ENCODE measurements at regions of chr6 and their contacts with region 1.

Region 1: DNA sequence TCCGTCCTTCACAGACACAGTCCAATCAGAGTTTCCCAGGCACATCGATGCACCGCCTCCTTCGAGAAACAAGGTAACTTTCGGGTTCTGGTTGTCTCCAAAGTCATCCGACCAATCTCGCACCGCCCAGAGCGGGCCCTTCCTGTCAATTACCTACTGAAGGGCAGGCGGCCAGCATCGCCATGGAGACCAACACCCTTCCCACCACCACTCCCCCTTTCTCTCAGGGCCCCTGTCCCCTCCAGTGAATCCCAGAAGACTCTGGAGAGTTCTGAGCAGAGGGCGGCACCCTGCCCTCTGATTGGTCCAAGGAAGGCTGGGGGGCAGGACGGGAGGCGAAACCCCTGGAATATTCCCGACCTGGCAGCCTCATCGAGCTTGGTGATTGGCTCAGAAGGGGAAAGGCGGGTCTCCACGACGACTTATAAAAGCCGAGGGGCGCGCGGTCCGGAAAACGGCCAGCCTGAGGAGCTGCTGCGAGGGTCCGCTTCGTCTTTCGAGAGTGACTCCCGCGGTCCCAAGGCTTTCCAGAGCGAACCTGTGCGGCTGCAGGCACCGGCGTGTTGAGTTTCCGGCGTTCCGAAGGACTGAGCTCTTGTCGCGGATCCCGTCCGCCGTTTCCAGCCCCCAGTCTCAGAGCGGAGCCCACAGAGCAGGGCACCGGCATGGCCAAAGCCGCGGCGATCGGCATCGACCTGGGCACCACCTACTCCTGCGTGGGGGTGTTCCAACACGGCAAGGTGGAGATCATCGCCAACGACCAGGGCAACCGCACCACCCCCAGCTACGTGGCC is at the start of gene HSPA1B:
- DNase-seq: peak; percentile 70
- ATAC-seq: peak; percentile 76
- H3K4me3 Mint-ChIP-seq: peak within 1 kb of the TSS; percentile 91
- H3K27ac Mint-ChIP-seq: peak within 1 kb of the TSS; percentile 99
- H3K4me1 Mint-ChIP-seq: peaks cover 40% of the 10 kb centered on the region
- H3K27me3 Mint-ChIP-seq: no peaks in the 10 kb centered on the region
- CTCF ChIP-seq: no peak
- total RNA-seq, gene HSPA1B: 23.7 and 30.4 TPM in 2 replicates

Region 2: DNA sequence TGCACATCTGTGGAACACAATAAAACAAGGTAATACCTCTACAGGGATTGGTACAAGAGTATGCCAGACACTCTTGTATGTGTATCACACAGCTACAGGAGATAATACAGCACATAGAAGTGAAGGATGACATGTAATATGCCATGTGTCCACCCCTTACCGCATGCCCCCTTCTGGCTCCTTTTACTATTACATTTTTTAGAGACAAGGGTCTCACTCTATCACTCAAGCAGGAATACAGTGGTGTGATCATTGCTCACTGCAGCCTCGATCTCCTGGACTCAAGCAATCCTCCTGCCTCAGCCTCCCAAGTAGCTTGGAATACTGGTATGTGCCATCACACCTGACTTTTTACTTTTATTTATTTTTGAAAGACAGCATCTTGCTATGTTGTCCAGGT is 230.5 kb before region 1 on chr6:
- CTCF ChIA-PET with region 1: interaction called, 17 read pairs
- POLR2A ChIA-PET with region 1: interaction called, 12 read pairs
- intact Hi-C with region 1: loop called (anchors 1 kb)
- DNase-seq: no peak
- ATAC-seq: peak; percentile 73
- H3K4me3 Mint-ChIP-seq: peak overlapping the region; percentile 25
- H3K27ac Mint-ChIP-seq: peak overlapping the region; percentile 75
- H3K4me1 Mint-ChIP-seq: peaks cover 58% of the 10 kb centered on the region
- H3K27me3 Mint-ChIP-seq: no peaks in the 10 kb centered on the region
- CTCF ChIP-seq: no peak

Region 3: GRCh38 chr6:31680840-31681671 is 146.4 kb before region 1 on chr6 and contains the start of gene LY6G5C:
- CTCF ChIA-PET with region 1: interaction called, 22 read pairs
- POLR2A ChIA-PET with region 1: interaction called, 23 read pairs
- intact Hi-C with region 1: loop called (anchors 1 kb)
- DNase-seq: peak; percentile 46
- ATAC-seq: peak; percentile 75
- H3K4me3 Mint-ChIP-seq: peak within 1 kb of the TSS; percentile 84
- H3K27ac Mint-ChIP-seq: peak within 1 kb of the TSS; percentile 72
- H3K4me1 Mint-ChIP-seq: peaks cover 40% of the 10 kb centered on the region
- H3K27me3 Mint-ChIP-seq: no peaks in the 10 kb centered on the region
- CTCF ChIP-seq: no peak
- total RNA-seq, gene LY6G5C: 0.29 and 0.73 TPM in 2 replicates

Region 4: DNA sequence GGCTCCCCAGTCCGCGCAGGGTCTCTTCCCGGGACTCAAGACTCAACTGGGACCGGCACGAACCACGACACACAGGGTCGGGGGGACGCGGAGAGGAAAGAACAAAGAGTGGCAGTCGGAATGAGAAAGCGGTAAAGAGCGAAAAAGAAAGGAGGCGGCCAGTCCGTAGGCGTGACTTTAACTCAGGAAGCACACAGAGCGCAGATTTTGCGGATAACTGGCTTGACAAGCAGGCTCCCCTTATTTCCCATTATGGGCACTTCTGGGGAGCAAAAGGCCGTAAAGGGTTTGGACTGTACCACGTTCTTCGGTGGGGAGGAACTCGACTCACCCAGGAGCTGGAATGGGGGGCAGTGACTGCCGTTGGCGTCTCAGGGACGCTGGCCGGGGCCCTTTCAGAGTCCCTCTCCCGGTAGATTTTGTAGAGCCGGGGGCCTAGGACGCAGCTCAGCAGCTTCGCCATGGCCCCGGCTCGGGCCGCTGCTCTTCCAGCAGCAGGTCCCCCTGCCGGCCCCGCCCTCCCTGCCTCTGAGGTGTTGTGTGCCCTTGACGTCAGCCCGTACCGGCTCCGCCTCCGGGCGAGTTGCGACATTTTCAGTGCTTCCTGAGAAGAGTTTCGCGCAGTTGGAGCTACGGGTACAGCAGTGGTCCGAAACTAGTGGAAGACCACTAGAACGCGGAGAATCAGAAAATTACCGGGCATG is 124.5 kb before region 1 on chr6 and contains the start of gene ABHD16A:
- CTCF ChIA-PET with region 1: no interaction called
- POLR2A ChIA-PET with region 1: interaction called, 6 read pairs
- intact Hi-C with region 1: loop called (anchors 1 kb)
- DNase-seq: peak; percentile 94
- ATAC-seq: peak; percentile 93
- H3K4me3 Mint-ChIP-seq: peak within 1 kb of the TSS; percentile 99
- H3K27ac Mint-ChIP-seq: peak within 1 kb of the TSS; percentile 89
- H3K4me1 Mint-ChIP-seq: peaks cover 28% of the 10 kb centered on the region
- H3K27me3 Mint-ChIP-seq: no peaks in the 10 kb centered on the region
- CTCF ChIP-seq: no peak
- total RNA-seq, gene ABHD16A: 49.3 and 59.1 TPM in 2 replicates

Region 5: GRCh38 chr6:31769684-31770371 is 57.7 kb before region 1 on chr6:
- CTCF ChIA-PET with region 1: interaction called, 14 read pairs
- POLR2A ChIA-PET with region 1: interaction called, 20 read pairs
- intact Hi-C with region 1: loop called (anchors 1 kb)
- DNase-seq: peak; percentile 76
- ATAC-seq: peak; percentile 98
- H3K4me3 Mint-ChIP-seq: no peak overlapping the region
- H3K27ac Mint-ChIP-seq: no peak overlapping the region
- H3K4me1 Mint-ChIP-seq: peaks cover 16% of the 10 kb centered on the region
- H3K27me3 Mint-ChIP-seq: no peaks in the 10 kb centered on the region
- CTCF ChIP-seq: no peak

Region 6: GRCh38 chr6:31815025-31815838 is 12.3 kb before region 1 on chr6 and contains the starts of genes HSPA1A and HSPA1L:
- CTCF ChIA-PET with region 1: interaction called, 10 read pairs
- POLR2A ChIA-PET with region 1: interaction called, 34 read pairs
- intact Hi-C with region 1: loop called (anchors 2 kb)
- DNase-seq: peak; percentile 59
- ATAC-seq: peak; percentile 49
- H3K4me3 Mint-ChIP-seq: peak within 1 kb of the TSS; percentile 91
- H3K27ac Mint-ChIP-seq: peak within 1 kb of the TSS; percentile 90
- H3K4me1 Mint-ChIP-seq: peaks cover 30% of the 10 kb centered on the region
- H3K27me3 Mint-ChIP-seq: no peaks in the 10 kb centered on the region
- CTCF ChIP-seq: no peak
- total RNA-seq, gene HSPA1A: 27.1 and 28.1 TPM in 2 replicates
- total RNA-seq, gene HSPA1L: 1.2 and 2.1 TPM in 2 replicates

Region 7: DNA sequence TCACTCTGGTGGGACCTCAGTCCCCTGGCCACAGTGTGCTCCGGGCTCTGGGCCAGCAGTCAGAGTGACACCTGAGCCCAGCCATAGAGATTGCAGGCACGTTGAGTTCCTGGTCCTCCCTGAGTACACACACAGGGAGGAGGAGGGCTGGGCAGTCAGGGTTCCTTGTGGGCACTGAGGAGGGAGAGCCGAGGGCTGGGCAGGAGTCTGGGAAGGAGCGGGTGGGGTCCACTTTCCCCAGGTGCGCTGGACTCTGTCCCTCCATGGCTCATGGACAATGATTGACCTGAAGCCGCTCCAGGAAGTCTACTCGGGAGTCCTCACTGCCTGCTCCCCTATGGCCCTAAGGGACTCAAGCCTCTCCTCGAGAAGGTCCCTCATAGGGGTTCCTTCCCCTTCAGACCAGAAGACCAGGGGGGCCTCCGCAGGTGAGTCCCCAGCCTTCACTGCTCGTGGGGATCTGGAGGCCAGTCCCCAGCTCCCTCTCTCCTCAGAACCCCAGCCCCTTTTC is 50.2 kb after region 1 on chr6:
- CTCF ChIA-PET with region 1: no interaction called
- POLR2A ChIA-PET with region 1: no interaction called
- intact Hi-C with region 1: no loop called
- DNase-seq: no peak
- ATAC-seq: no peak
- H3K4me3 Mint-ChIP-seq: no peak overlapping the region
- H3K27ac Mint-ChIP-seq: no peak overlapping the region
- H3K4me1 Mint-ChIP-seq: no peaks in the 10 kb centered on the region
- H3K27me3 Mint-ChIP-seq: no peaks in the 10 kb centered on the region
- CTCF ChIP-seq: no peak